ENCODE measurements at regions of chr13 and their contacts with region 1.

Region 1: DNA sequence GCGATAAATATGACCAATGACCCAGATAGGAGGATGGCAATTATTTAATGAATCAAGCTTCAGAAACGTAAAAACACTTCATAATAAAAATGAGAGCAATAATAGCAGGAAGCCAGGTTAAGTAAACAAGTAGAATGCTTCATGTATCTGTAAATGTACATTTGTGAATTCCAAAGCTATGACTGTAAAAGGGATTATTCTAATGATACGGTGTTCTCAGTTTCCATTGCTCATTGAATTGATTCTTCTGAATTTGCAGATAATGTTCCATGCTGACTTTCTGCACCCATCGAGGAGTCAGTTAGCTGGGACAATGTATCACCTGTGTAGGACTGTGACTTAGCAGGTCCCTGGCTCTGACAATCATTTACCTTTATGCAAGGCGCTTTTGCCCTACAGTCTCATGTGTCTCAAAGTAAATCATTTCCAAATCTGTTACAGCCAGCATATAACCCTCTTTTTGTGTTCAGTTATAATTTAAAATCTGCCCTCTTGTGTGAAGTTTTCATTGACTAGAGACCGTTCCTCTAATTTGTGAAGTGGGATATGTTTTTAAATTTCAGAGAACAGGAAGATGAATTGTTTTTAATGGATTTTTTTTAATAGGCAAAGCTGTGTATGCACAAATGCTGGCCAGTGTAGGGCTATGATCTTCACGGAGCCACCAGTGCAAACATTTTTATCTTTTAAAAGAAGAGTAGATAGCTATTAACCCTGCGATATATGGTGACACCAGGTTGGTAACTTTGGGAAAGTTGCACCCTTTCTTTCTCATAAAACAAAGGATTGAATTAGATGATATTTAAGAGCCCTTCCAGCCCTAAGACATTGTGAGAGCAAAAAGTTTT is 267.1 kb downstream of the KLF5 start:
- DNase-seq: peak; percentile 2
- H3K4me3 ChIP-seq: no peak overlapping the region
- H3K27ac ChIP-seq: no peak overlapping the region
- H3K4me1 ChIP-seq: peaks cover 10% of the 10 kb centered on the region
- H3K27me3 ChIP-seq: no peaks in the 10 kb centered on the region
- CTCF ChIP-seq: no peak
- POLR2A ChIP-seq: no peak

Region 2: GRCh38 chr13:73303851-73304250 is 22.1 kb before region 1 on chr13:
- CTCF ChIA-PET with region 1: no interaction called
- POLR2A ChIA-PET with region 1: interaction called, 10 read pairs
- dilution Hi-C with region 1: no loop called
- intact Hi-C with region 1: no loop called
- DNase-seq: no peak
- H3K4me3 ChIP-seq: no peak overlapping the region
- H3K27ac ChIP-seq: no peak overlapping the region
- H3K4me1 ChIP-seq: no peaks in the 10 kb centered on the region
- H3K27me3 ChIP-seq: no peaks in the 10 kb centered on the region
- CTCF ChIP-seq: no peak
- POLR2A ChIP-seq: no peak

Region 3: GRCh38 chr13:73677048-73677601 is 351.2 kb after region 1 on chr13:
- CTCF ChIA-PET with region 1: no interaction called
- POLR2A ChIA-PET with region 1: no interaction called
- dilution Hi-C with region 1: no loop called
- intact Hi-C with region 1: loop called (anchors 10 kb)
- DNase-seq: peak; percentile 90
- H3K4me3 ChIP-seq: no peak overlapping the region
- H3K27ac ChIP-seq: peak overlapping the region; percentile 92
- H3K4me1 ChIP-seq: peaks cover 19% of the 10 kb centered on the region
- H3K27me3 ChIP-seq: no peaks in the 10 kb centered on the region
- CTCF ChIP-seq: no peak
- POLR2A ChIP-seq: no peak